Naive thymus-derived CD4-positive, alpha-beta T cell (primary cell): ENCODE measurements at regions of chr3 and their contacts with region 1.

Region 1: DNA sequence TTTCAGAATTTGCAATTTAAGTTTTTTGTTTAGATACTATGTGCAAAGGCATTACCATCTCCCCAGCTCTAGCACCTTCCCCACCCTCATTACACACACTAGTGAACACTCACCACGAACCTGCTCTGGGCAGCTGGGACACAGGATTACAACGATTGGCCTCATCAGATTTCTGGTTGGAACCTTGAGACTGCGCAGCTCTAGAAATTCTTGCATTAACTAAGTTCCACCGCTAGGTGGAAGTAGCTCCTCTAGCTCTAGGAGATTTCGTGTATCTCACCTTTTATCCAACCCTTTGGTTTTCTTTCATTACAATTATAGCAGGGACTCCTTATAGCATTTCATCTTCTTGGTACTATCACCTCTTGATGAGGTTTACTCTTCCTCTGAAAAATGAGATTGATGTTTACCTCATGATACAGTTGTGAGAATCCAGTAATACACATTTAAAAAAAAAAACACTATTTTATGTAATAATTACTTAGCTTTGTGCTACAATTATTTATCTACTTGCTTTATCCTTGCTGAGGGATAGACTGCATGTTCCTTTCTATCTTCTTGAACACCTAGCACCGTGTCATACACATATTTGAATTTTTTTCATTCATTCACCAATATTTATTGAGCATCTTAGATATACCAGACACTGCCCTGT is 28.7 kb upstream of the PLOD2 start:
- DNase-seq: peak in 5 of 9 donors; percentile 11 to 34 (median 12)
- ATAC-seq: peak; percentile 70
- H3K4me3 ChIP-seq: no peak overlapping the region
- H3K4me3 Mint-ChIP-seq: no peak overlapping the region
- H3K27ac ChIP-seq: no peak overlapping the region
- H3K27ac Mint-ChIP-seq: no peak overlapping the region
- H3K4me1 ChIP-seq: no peaks in the 10 kb centered on the region
- H3K4me1 Mint-ChIP-seq: no peaks in the 10 kb centered on the region
- H3K27me3 ChIP-seq: no peaks in the 10 kb centered on the region
- H3K27me3 Mint-ChIP-seq: peaks cover 0 to 26% (median 5%) of the 10 kb centered on the region in 5 donors

Region 2: DNA sequence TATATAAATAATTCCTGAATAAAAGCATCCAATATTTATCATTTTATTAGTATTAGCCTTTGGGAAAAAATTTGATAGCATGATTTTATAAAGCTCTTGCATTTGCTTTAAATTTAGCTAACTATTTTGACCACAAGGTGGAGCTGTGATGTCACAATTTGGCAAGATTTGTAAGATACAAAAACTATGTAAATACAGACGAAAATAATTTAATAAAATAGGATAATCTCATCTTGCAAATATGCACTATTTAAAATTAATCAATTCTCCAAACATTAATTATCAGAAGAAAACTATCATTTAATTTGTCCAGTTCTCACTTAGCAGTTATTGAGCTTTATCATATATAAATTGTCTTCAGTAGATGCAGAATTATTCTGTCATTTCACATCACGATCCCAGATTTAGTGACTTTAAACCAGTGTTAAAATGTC is 124.1 kb before region 1 on chr3:
- CTCF ChIA-PET with region 1: no interaction called
- POLR2A ChIA-PET with region 1: no interaction called
- intact Hi-C with region 1: loop called in 1 of 2 experiments (anchors 2 kb)
- DNase-seq: peak in 1 of 9 donors; percentile 7
- ATAC-seq: no peak
- H3K4me3 ChIP-seq: no peak overlapping the region
- H3K4me3 Mint-ChIP-seq: no peak overlapping the region
- H3K27ac ChIP-seq: no peak overlapping the region
- H3K27ac Mint-ChIP-seq: no peak overlapping the region
- H3K4me1 ChIP-seq: no peaks in the 10 kb centered on the region
- H3K4me1 Mint-ChIP-seq: no peaks in the 10 kb centered on the region
- H3K27me3 ChIP-seq: no peaks in the 10 kb centered on the region
- H3K27me3 Mint-ChIP-seq: no peaks in the 10 kb centered on the region

Region 3: GRCh38 chr3:146326670-146327543 is 137.3 kb after region 1 on chr3:
- CTCF ChIA-PET with region 1: no interaction called
- POLR2A ChIA-PET with region 1: no interaction called
- intact Hi-C with region 1: loop called in 1 of 2 experiments (anchors 1 kb)
- DNase-seq: no peak
- ATAC-seq: no peak
- H3K4me3 ChIP-seq: no peak overlapping the region
- H3K4me3 Mint-ChIP-seq: no peak overlapping the region
- H3K27ac ChIP-seq: no peak overlapping the region
- H3K27ac Mint-ChIP-seq: no peak overlapping the region
- H3K4me1 ChIP-seq: no peaks in the 10 kb centered on the region
- H3K4me1 Mint-ChIP-seq: no peaks in the 10 kb centered on the region
- H3K27me3 ChIP-seq: no peaks in the 10 kb centered on the region
- H3K27me3 Mint-ChIP-seq: peaks cover 0 to 8% (median 0%) of the 10 kb centered on the region in 5 donors

Region 4: GRCh38 chr3:146577662-146578061 is 388.0 kb after region 1 on chr3:
- CTCF ChIA-PET with region 1: interaction called, 8 read pairs
- POLR2A ChIA-PET with region 1: no interaction called
- intact Hi-C with region 1: loop called (anchors 1 kb)
- DNase-seq: peak in 6 of 9 donors; percentile 19 to 46 (median 34)
- ATAC-seq: peak; percentile 67
- H3K4me3 ChIP-seq: no peak overlapping the region
- H3K4me3 Mint-ChIP-seq: no peak overlapping the region
- H3K27ac ChIP-seq: no peak overlapping the region
- H3K27ac Mint-ChIP-seq: no peak overlapping the region
- H3K4me1 ChIP-seq: no peaks in the 10 kb centered on the region
- H3K4me1 Mint-ChIP-seq: peaks cover 0 to 5% (median 0%) of the 10 kb centered on the region in 7 donors
- H3K27me3 ChIP-seq: no peaks in the 10 kb centered on the region
- H3K27me3 Mint-ChIP-seq: peaks cover 0 to 23% (median 3%) of the 10 kb centered on the region in 5 donors

Region 5: DNA sequence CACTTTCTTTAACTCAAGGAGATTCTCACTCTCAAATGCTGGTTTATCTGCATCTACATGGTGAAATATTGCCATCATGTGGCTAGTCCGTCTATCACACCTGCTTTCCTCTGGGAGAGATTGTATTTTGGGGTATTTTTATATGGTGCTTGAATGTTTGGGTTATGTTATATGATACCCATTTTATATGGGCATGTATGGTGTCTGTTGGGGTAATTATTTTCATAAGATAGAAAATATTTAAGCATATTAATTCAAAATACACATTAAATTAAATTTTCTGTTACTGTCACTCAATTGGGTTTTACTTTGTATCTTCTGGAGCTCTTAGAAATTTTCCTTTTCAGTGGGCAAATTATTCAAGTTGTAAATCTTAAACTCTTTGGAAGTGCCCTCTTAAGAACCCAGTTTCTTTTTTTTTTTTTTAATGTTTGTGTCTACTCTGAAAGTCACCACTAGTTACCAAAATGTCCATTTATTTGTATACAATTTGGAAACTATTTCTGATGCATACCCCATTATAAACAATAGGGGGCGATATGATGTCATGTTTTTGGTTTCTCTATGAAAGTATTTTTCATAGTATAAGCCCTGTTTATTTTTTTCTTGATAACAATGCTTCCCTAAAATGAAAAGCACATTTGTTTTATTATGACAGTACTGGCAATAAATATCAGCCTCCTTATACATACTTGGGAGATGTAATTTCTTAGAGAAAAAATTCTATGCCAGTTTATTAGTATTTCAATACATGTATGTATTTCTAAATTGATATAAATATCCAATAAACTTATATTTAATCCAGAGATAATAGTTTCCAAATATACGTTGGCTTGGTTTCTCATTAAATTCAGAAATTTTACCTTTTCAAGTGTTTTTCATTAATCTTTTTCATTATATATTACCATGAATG is 451.6 kb after region 1 on chr3:
- CTCF ChIA-PET with region 1: no interaction called
- POLR2A ChIA-PET with region 1: no interaction called
- intact Hi-C with region 1: loop called (anchors 1 to 2 kb)
- DNase-seq: peak in 2 of 9 donors; percentile 1 to 7
- ATAC-seq: no peak
- H3K4me3 ChIP-seq: no peak overlapping the region
- H3K4me3 Mint-ChIP-seq: no peak overlapping the region
- H3K27ac ChIP-seq: no peak overlapping the region
- H3K27ac Mint-ChIP-seq: no peak overlapping the region
- H3K4me1 ChIP-seq: no peaks in the 10 kb centered on the region
- H3K4me1 Mint-ChIP-seq: no peaks in the 10 kb centered on the region
- H3K27me3 ChIP-seq: no peaks in the 10 kb centered on the region
- H3K27me3 Mint-ChIP-seq: peaks cover 0 to 6% (median 5%) of the 10 kb centered on the region in 5 donors